HepG2 (cell line): ENCODE measurements at regions of chr4 and their contacts with region 1.

Region 1: GRCh38 chr4:167622481-167623246 is 388.4 kb upstream of the SPOCK3 start:
- DNase-seq: peak; percentile 10
- ATAC-seq: peak; percentile 92
- H3K4me3 ChIP-seq: no peak overlapping the region
- H3K27ac ChIP-seq: no peak overlapping the region
- H3K4me1 ChIP-seq: peaks cover 6% of the 10 kb centered on the region; the same call in 1 of the 2 replicates
- H3K27me3 ChIP-seq: no peaks in the 10 kb centered on the region
- CTCF ChIP-seq: peak; percentile 64
- EP300 ChIP-seq: no peak
- POLR2A ChIP-seq: no peak
- RAD21 ChIP-seq: no peak

Region 2: GRCh38 chr4:168076989-168077725 is 454.5 kb after region 1 on chr4:
- CTCF ChIA-PET with region 1: no interaction called
- POLR2A ChIA-PET with region 1: no interaction called
- in situ Hi-C with region 1: no loop called
- intact Hi-C with region 1: loop called (anchors 1 kb)
- DNase-seq: peak; percentile 44
- ATAC-seq: peak; percentile 77
- H3K4me3 ChIP-seq: no peak overlapping the region
- H3K27ac ChIP-seq: no peak overlapping the region
- H3K4me1 ChIP-seq: no peaks in the 10 kb centered on the region
- H3K27me3 ChIP-seq: no peaks in the 10 kb centered on the region
- CTCF ChIP-seq: peak; percentile 79
- EP300 ChIP-seq: no peak
- POLR2A ChIP-seq: no peak
- RAD21 ChIP-seq: peak; percentile 20; the same call in 1 of the 2 replicates